Common myeloid progenitor, CD34-positive (primary cell): ENCODE measurements at regions of chr2 and their contacts with region 1.

Region 1: DNA sequence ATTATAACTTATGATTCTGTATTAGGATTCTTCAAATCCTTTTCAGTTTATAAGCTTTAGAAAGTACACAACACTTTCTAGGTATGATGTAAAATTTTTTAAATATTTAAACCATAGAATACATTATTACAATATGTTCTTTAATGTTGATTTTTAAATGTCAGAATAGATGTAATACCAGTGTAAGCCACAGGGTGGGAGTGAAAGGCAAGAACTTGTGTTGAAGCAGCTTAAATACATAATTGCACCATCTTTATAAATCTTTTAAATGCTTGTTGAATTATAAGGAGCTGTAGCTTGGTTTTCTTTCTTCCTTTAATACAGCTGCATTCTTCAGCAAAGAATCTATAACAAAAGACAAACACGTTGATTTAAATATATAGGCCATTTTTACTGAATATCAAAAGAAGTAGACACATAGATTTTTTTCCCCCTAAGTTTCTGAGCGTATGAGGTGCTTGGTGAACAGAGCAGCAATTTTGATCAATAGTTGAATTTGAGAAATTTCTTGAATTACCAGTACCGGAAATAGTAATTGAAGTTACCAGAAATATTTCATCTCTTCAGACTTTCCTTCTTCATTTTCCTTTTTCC is 63.0 kb downstream of the TANK start:
- DNase-seq: peak; percentile 47 to 69 (median 65)
- H3K4me3 ChIP-seq: no peak overlapping the region
- H3K27ac ChIP-seq: no peak overlapping the region
- H3K4me1 ChIP-seq: no peaks in the 10 kb centered on the region
- H3K27me3 ChIP-seq: no peaks in the 10 kb centered on the region

Region 2: DNA sequence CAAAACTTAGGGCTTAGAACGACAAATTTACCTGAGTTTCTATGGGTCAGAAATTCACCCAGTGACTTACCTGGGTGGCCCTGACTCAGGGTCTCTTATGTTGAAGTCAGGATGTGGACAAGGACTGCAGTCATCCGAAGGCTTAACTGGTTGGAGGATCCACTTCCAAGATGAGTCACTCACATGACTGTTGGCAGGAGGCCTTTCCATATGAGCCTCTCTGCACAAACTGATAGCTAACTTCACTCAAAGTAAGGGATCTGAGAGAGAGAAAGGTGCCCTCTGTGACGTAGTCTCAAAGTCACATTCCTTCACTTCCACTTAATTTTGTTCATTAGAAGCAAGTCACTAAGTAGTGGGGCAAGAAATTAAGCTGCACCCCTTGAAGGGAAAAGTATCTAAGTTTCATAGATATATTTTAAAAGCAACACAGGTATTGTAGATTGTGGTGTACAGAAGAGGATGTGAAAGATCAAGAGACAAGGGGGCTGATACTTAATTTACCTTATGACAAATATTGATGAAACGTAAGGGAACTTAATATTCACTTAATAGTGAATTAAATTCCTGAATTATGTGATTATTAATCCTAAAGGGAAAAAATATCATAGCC is 14.6 kb before region 1 on chr2:
- CTCF ChIA-PET with region 1: interaction called, 13 read pairs
- POLR2A ChIA-PET with region 1: no interaction called
- DNase-seq: no peak
- H3K4me3 ChIP-seq: no peak overlapping the region
- H3K27ac ChIP-seq: no peak overlapping the region
- H3K4me1 ChIP-seq: no peaks in the 10 kb centered on the region
- H3K27me3 ChIP-seq: no peaks in the 10 kb centered on the region

Region 3: GRCh38 chr2:161238560-161239325 is 15.5 kb after region 1 on chr2:
- CTCF ChIA-PET with region 1: interaction called, 35 read pairs
- POLR2A ChIA-PET with region 1: no interaction called
- DNase-seq: peak in 2 of 3 donors; percentile 65 to 81
- H3K4me3 ChIP-seq: peak overlapping the region; percentile 30 to 83 (median 65)
- H3K27ac ChIP-seq: no peak overlapping the region
- H3K4me1 ChIP-seq: peaks cover 0 to 33% (median 28%) of the 10 kb centered on the region in 4 experiments
- H3K27me3 ChIP-seq: peaks cover 0 to 8% (median 0%) of the 10 kb centered on the region in 5 experiments

Region 4: GRCh38 chr2:161273038-161273760 is 50.0 kb after region 1 on chr2:
- CTCF ChIA-PET with region 1: interaction called, 31 read pairs
- POLR2A ChIA-PET with region 1: no interaction called
- DNase-seq: peak; percentile 72 to 84 (median 82)
- H3K4me3 ChIP-seq: no peak overlapping the region
- H3K27ac ChIP-seq: no peak overlapping the region
- H3K4me1 ChIP-seq: no peaks in the 10 kb centered on the region
- H3K27me3 ChIP-seq: no peaks in the 10 kb centered on the region

Region 5: GRCh38 chr2:161332371-161332967 is 109.2 kb after region 1 on chr2:
- CTCF ChIA-PET with region 1: no interaction called
- POLR2A ChIA-PET with region 1: no interaction called
- DNase-seq: no peak
- H3K4me3 ChIP-seq: no peak overlapping the region
- H3K27ac ChIP-seq: no peak overlapping the region
- H3K4me1 ChIP-seq: no peaks in the 10 kb centered on the region
- H3K27me3 ChIP-seq: no peaks in the 10 kb centered on the region